HCT116 (cell line): ENCODE measurements at regions of chr6 and their contacts with region 1.

Region 1: DNA sequence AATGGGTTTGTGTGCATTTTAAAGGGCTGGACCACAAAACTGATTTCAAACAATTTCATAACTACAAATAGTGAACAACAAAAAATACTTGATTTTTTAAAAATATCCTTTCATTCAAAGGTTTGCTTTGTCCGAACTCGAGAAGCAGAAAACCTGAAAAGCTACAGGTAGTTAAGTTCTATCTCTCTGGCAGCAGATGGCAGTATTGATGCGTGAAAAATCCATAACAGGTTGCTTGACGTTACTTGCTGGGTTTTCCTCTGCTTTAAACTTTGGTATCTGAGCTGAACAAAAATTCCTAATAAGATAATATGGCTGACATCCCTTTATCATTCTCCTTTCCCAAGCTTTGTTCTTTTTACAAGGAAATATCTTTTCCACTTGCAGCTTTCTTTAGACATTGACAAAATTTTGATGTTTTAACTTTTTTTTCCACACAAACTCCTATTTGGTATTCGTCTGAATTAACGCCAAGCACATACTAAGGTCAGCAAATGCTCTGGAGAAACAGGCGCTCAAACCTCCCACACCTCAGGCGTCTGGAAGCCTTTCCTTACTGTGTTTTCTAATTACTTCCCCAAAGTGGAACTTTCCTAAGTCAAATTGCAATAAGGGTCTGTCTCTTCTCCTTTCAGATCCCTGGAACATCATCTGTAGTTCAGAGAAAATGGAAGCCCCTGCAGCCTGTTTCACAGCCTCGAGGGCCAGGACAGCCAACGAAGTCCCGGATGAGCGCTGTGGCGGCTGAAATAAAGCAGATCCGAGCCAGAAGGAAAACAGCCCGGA is 50.3 kb upstream of the GFRAL start:
- DNase-seq: peak; percentile 58
- ATAC-seq: peak; percentile 75
- H3K4me3 ChIP-seq: no peak overlapping the region
- H3K27ac ChIP-seq: no peak overlapping the region
- H3K4me1 ChIP-seq: 0 out of 4 replicates have a peak, but pooled peaks cover 0 to 4% of the 10 kb centered on the region in 2 experiments
- H3K27me3 ChIP-seq: 0 out of 2 replicates have a peak, but pooled peaks cover 4% of the 10 kb centered on the region
- CTCF ChIP-seq: peak; percentile 58 to 69 (median 59); a peak in 5 of 6 replicates
- POLR2A ChIP-seq: no peak
- RAD21 ChIP-seq: peak; percentile 77

Region 2: DNA sequence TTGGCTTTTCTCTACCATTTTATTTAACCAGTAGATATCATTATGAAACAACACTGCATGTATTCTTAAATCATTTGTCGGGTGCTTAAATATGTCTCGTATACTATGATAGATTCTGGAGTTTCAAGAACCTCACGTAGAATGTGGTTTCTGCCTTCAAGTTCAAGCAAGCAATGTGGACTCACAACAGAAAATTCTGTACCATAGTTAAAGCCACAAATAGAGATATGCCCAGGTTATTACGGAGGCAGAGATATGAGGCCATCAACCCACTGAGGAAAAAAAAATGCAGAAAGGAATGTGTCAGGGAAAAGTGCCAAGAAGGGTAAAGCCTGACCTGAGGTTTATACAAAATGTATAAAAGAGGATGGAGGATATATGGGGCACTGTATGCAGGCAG is 160.2 kb after region 1 on chr6:
- CTCF ChIA-PET with region 1: no interaction called
- POLR2A ChIA-PET with region 1: no interaction called
- RAD21 ChIA-PET with region 1: no interaction called
- intact Hi-C with region 1: loop called (anchors 5 kb)
- DNase-seq: no peak
- ATAC-seq: no peak
- H3K4me3 ChIP-seq: no peak overlapping the region
- H3K27ac ChIP-seq: no peak overlapping the region
- H3K4me1 ChIP-seq: no peaks in the 10 kb centered on the region
- H3K27me3 ChIP-seq: peaks cover 76% of the 10 kb centered on the region
- CTCF ChIP-seq: no peak
- POLR2A ChIP-seq: no peak
- RAD21 ChIP-seq: no peak

Region 3: GRCh38 chr6:55566036-55566710 is 289.2 kb after region 1 on chr6:
- CTCF ChIA-PET with region 1: no interaction called
- POLR2A ChIA-PET with region 1: no interaction called
- RAD21 ChIA-PET with region 1: no interaction called
- intact Hi-C with region 1: no loop called
- DNase-seq: no peak
- ATAC-seq: no peak
- H3K4me3 ChIP-seq: no peak overlapping the region
- H3K27ac ChIP-seq: no peak overlapping the region
- H3K4me1 ChIP-seq: no peaks in the 10 kb centered on the region
- H3K27me3 ChIP-seq: peaks cover 61% of the 10 kb centered on the region
- CTCF ChIP-seq: no peak
- POLR2A ChIP-seq: no peak
- RAD21 ChIP-seq: no peak

Region 4: DNA sequence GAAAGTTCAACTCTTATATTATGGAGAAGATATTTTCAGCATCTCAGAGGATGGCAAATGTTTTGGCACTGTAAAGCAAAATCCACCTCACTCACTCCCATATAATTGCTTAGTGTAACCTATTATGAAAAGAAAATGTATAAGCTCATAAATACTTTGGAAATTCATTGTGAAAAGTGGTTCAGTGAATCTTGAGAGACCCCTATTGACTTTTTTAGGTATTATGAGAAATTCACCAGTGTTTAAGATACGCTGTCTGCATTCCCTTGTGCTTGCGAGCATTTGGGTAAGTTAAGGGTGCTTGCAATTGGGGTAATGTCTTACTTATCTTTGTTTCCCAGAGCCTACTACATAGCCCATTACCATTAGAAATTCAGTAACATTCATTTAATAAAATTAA is 664.8 kb after region 1 on chr6:
- CTCF ChIA-PET with region 1: interaction called, 17 read pairs
- POLR2A ChIA-PET with region 1: no interaction called
- RAD21 ChIA-PET with region 1: no interaction called
- intact Hi-C with region 1: no loop called
- DNase-seq: no peak
- ATAC-seq: peak; percentile 44; the same call in 1 of the 2 replicates
- H3K4me3 ChIP-seq: no peak overlapping the region
- H3K27ac ChIP-seq: no peak overlapping the region
- H3K4me1 ChIP-seq: no peaks in the 10 kb centered on the region
- H3K27me3 ChIP-seq: peaks cover 19% of the 10 kb centered on the region
- CTCF ChIP-seq: peak in 2 of 3 experiments; percentile 15 to 19; a peak in 2 of 6 replicates
- POLR2A ChIP-seq: no peak
- RAD21 ChIP-seq: peak; percentile 42; the same call in 1 of the 2 replicates

Region 5: GRCh38 chr6:55953335-55953734 is 676.4 kb after region 1 on chr6:
- CTCF ChIA-PET with region 1: interaction called, 23 read pairs
- POLR2A ChIA-PET with region 1: no interaction called
- RAD21 ChIA-PET with region 1: no interaction called
- intact Hi-C with region 1: loop called (anchors 5 kb)
- DNase-seq: peak; percentile 15
- ATAC-seq: peak; percentile 47; the same call in 1 of the 2 replicates
- H3K4me3 ChIP-seq: no peak overlapping the region
- H3K27ac ChIP-seq: no peak overlapping the region
- H3K4me1 ChIP-seq: no peaks in the 10 kb centered on the region
- H3K27me3 ChIP-seq: no peaks in the 10 kb centered on the region
- CTCF ChIP-seq: peak; percentile 13 to 42 (median 35); a peak in 4 of 6 replicates
- POLR2A ChIP-seq: no peak
- RAD21 ChIP-seq: peak; percentile 69

Region 6: GRCh38 chr6:56292505-56293181 is 1015.7 kb after region 1 on chr6:
- CTCF ChIA-PET with region 1: interaction called, 22 read pairs
- POLR2A ChIA-PET with region 1: no interaction called
- RAD21 ChIA-PET with region 1: interaction called in 1 of 2 experiments, 4 read pairs
- intact Hi-C with region 1: loop called (anchors 5 kb)
- DNase-seq: peak; percentile 53
- ATAC-seq: peak; percentile 86
- H3K4me3 ChIP-seq: no peak overlapping the region
- H3K27ac ChIP-seq: no peak overlapping the region
- H3K4me1 ChIP-seq: peaks cover 0 to 5% of the 10 kb centered on the region in 2 experiments; a peak in 2 of 4 replicates
- H3K27me3 ChIP-seq: no peaks in the 10 kb centered on the region
- CTCF ChIP-seq: peak; percentile 50 to 80 (median 74); a peak in 5 of 6 replicates
- POLR2A ChIP-seq: no peak
- RAD21 ChIP-seq: peak; percentile 91